ENCODE measurements at regions of chr5 and their contacts with region 1.

Region 1: DNA sequence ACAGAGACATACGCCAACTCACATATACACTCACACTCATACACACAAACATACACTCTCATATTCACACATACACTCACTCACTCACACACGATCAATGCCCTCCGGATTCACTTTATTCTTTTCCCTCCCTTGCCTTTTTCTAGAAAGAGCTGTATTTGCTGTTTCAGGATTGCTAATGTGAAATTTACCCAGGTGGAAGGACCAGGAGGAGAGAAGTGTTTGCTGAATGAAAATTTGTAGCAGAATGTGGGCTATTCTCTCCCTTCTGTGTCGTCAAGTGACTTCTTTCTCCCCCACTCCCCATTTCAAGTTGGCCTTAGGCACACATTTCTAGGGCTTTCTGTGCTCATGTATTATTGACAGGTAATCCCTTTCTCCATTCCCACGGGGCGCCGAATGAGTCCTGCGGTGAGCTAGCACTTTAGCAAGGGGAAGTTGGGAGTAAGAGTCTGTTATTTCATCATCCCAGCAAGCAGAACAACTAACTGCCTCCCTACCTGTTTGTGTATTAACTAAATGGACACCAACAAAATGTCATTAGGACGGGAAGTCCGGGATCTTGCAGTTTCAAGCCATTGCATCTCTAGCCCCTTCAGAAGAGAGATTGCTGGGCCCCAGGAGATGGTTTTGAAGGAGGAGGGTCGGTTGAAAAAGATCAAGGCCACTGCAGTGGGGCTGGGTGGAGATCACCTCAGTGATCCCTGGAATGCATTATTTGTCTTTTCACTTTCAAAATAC is 97.1 kb upstream of the TAF11L2 start:
- DNase-seq: no peak
- H3K4me3 ChIP-seq: no peak overlapping the region
- H3K27ac ChIP-seq: no peak overlapping the region
- H3K27me3 ChIP-seq: peaks cover 0 to 29% (median 0%) of the 10 kb centered on the region in 45 donors
- CTCF ChIP-seq: no peak

Region 2: GRCh38 chr5:17412760-17413671 is 12.1 kb after region 1 on chr5:
- intact Hi-C with region 1: loop called in 1 of 2 experiments (anchors 1 kb)
- DNase-seq: peak in 1 of 10 donors; percentile 46
- H3K4me3 ChIP-seq: no peak overlapping the region
- H3K27ac ChIP-seq: peak overlapping the region in 24 of 59 donors; percentile 7 to 74 (median 29)
- H3K27me3 ChIP-seq: no peaks in the 10 kb centered on the region
- CTCF ChIP-seq: no peak

Region 3: DNA sequence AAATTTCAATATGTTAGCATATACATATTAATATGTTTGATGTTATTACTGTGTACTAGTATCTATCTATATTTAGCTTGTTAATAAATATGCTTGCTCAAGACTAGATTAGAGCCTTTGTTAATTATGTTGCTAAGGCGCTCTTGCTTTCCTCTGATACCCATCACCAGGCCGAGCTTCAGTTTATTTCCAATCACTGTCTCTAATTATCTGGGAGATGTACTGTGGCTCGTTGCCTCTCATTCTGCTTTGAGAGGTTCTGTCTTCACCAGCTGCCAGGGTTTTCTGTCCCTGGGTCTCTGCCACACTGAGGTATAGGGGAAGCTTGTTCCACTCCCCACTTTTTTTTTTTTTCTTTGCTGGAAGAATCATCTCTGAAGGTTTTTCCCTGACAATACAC is 76.1 kb after region 1 on chr5:
- intact Hi-C with region 1: no loop called
- DNase-seq: no peak
- H3K4me3 ChIP-seq: no peak overlapping the region
- H3K27ac ChIP-seq: no peak overlapping the region
- H3K27me3 ChIP-seq: no peaks in the 10 kb centered on the region
- CTCF ChIP-seq: no peak

Region 4: GRCh38 chr5:17918373-17919104 is 517.6 kb after region 1 on chr5:
- intact Hi-C with region 1: loop called in 1 of 2 experiments (anchors 5 kb)
- DNase-seq: no peak
- H3K4me3 ChIP-seq: no peak overlapping the region
- H3K27ac ChIP-seq: peak overlapping the region in 47 of 59 donors; percentile 5 to 80 (median 52)
- H3K27me3 ChIP-seq: no peaks in the 10 kb centered on the region
- CTCF ChIP-seq: no peak

Measured in dorsolateral prefrontal cortex (tissue), 120 donors.